HCT116 (cell line): ENCODE measurements at regions of chr19 and their contacts with region 1.

Region 1: DNA sequence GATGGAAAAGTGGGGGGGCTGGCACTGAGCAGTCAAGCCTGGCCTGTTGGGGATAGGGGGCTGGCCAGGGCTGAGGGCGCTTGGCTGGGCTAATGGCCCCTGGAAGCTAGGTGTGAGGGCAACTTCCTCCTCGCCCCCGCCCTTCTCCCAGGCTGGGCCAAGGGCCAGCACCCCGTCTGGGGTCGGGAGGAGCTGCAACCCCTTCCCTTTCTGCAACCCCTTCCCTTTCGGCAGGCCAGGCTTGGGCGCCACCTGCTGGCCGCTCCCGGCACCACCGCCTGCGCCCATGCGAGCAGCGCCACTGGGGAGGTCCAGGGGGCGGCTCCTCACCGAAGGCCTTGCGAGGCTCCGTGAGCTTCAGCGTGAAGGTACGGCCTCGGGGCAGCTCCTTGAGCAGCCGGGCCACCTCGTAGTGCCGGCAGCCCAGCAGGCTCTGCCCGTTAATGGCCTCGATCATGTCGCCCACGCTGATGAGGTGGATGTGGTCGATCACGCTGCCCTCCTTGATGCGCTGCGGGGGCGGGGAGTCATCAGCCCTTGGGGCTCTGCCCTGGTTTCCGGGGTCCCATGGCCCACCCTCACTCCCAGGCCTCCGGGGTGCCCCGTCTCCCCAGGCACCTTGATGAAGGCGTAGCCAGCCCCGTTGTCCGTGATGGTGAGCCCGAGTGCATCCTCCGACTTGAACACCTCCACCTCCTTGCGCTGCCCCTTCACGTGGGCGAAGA is 5.0 kb upstream of the PTGER1 start:
- DNase-seq: no peak
- ATAC-seq: peak; percentile 71
- H3K4me3 ChIP-seq: no peak overlapping the region
- H3K27ac ChIP-seq: peak overlapping the region; percentile 37; the same call in 1 of the 2 replicates
- H3K4me1 ChIP-seq: peaks cover 18 to 35% of the 10 kb centered on the region in 2 experiments; a peak in 3 of 4 replicates
- H3K27me3 ChIP-seq: no peaks in the 10 kb centered on the region
- CTCF ChIP-seq: peak; percentile 77 to 95 (median 94)
- POLR2A ChIP-seq: no peak
- RAD21 ChIP-seq: peak; percentile 77

Region 2: GRCh38 chr19:14035709-14036108 is 444.4 kb before region 1 on chr19:
- CTCF ChIA-PET with region 1: no interaction called
- POLR2A ChIA-PET with region 1: no interaction called
- RAD21 ChIA-PET with region 1: no interaction called
- intact Hi-C with region 1: no loop called
- DNase-seq: no peak
- ATAC-seq: no peak
- H3K4me3 ChIP-seq: no peak overlapping the region
- H3K27ac ChIP-seq: no peak overlapping the region
- H3K4me1 ChIP-seq: peaks cover 3 to 15% of the 10 kb centered on the region in 2 experiments
- H3K27me3 ChIP-seq: no peaks in the 10 kb centered on the region
- CTCF ChIP-seq: no peak
- POLR2A ChIP-seq: no peak
- RAD21 ChIP-seq: no peak

Region 3: GRCh38 chr19:14432791-14433553 is 47.2 kb before region 1 on chr19 and contains the start of gene PKN1:
- CTCF ChIA-PET with region 1: no interaction called
- POLR2A ChIA-PET with region 1: no interaction called
- RAD21 ChIA-PET with region 1: no interaction called
- intact Hi-C with region 1: loop called (anchors 10 kb)
- DNase-seq: no peak
- ATAC-seq: peak; percentile 48
- H3K4me3 ChIP-seq: peak within 1 kb of the TSS; percentile 75 to 79
- H3K27ac ChIP-seq: peak within 1 kb of the TSS; percentile 95
- H3K4me1 ChIP-seq: peaks cover 21 to 41% of the 10 kb centered on the region in 2 experiments
- H3K27me3 ChIP-seq: no peaks in the 10 kb centered on the region
- CTCF ChIP-seq: 0 out of 6 replicates have a peak, but pooled peaks of 1 of the 3 experiments have one; percentile 7
- POLR2A ChIP-seq: no peak
- RAD21 ChIP-seq: no peak
- total RNA-seq, gene PKN1: 248 TPM